ENCODE measurements at regions of chr6 and their contacts with region 1.

Region 1: GRCh38 chr6:40308533-40309306 is 278.4 kb downstream of the LRFN2 start:
- DNase-seq: peak in 2 of 3 donors; percentile 70 to 84
- ATAC-seq: peak; percentile 87
- H3K4me3 ChIP-seq: no peak overlapping the region
- H3K4me1 ChIP-seq: no peaks in the 10 kb centered on the region
- CTCF ChIP-seq: peak; percentile 89

Region 2: GRCh38 chr6:39870950-39871349 is 437.8 kb before region 1 on chr6:
- intact Hi-C with region 1: loop called in 1 of 2 experiments (anchors 10 kb)
- DNase-seq: no peak
- ATAC-seq: no peak
- H3K4me3 ChIP-seq: no peak overlapping the region
- H3K4me1 ChIP-seq: no peaks in the 10 kb centered on the region
- CTCF ChIP-seq: no peak

Region 3: GRCh38 chr6:39980839-39981580 is 327.7 kb before region 1 on chr6:
- intact Hi-C with region 1: loop called (anchors 5 to 10 kb)
- DNase-seq: peak in 1 of 3 donors; percentile 71
- ATAC-seq: peak; percentile 68
- H3K4me3 ChIP-seq: no peak overlapping the region
- H3K4me1 ChIP-seq: peaks cover 7% of the 10 kb centered on the region
- CTCF ChIP-seq: no peak

Region 4: DNA sequence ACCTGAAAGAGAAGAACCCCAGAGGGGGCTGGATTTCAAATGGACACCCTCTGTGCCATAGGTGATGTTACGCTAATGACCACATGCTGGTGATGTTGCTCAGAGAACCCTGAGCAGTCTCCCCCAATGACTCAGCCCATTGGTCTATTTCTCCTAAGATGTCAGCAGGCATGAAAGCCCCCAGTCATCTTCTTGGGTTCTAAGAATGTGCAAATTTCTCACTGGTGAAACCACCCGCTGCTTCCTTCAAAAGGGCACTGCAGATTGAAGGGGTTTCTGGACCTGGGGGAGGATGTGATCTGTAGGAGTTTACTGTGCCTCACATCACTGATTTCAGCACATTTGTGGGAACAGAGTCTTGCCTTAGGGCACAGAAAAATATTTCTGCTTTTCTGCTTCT is 76.0 kb before region 1 on chr6:
- intact Hi-C with region 1: no loop called
- DNase-seq: no peak
- ATAC-seq: no peak
- H3K4me3 ChIP-seq: no peak overlapping the region
- H3K4me1 ChIP-seq: no peaks in the 10 kb centered on the region
- CTCF ChIP-seq: no peak

Region 5: GRCh38 chr6:40466986-40467539 is 158.3 kb after region 1 on chr6:
- intact Hi-C with region 1: no loop called
- DNase-seq: no peak
- ATAC-seq: no peak
- H3K4me3 ChIP-seq: no peak overlapping the region
- H3K4me1 ChIP-seq: no peaks in the 10 kb centered on the region
- CTCF ChIP-seq: no peak

Measured in mucosa of descending colon (tissue), 3 donors.